Pancreas (tissue), 10 donors: ENCODE measurements at regions of chr3 and their contacts with region 1.

Region 1: DNA sequence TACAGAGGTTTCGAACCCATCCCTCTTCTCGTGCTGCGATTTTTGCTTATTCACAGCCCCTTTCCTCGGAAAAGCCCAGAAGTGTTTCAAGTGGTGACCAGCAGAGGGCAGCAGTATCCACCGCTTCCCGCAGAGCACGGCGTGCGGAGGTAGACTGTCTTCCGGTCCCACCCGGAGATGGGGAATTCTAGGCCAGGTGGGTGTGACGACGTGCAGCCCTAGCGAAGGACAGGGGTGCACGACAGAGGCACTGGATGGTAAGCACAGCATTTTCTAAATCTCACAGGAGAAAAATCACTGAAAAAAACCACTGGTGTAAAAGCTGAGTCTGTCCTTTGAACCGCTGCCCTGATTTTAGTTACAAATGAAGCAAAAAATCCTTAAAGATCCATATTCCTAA is 7.4 kb upstream of the PSMD6 start:
- DNase-seq: peak; percentile 58 to 83 (median 76)
- ATAC-seq: peak; percentile 85 to 99 (median 98)
- H3K4me3 ChIP-seq: peak overlapping the region in 2 of 4 donors; percentile 4 to 27
- H3K27ac ChIP-seq: no peak overlapping the region
- H3K4me1 ChIP-seq: no peaks in the 10 kb centered on the region
- H3K27me3 ChIP-seq: no peaks in the 10 kb centered on the region
- CTCF ChIP-seq: peak; percentile 70 to 79 (median 73)

Region 2: GRCh38 chr3:63911873-63912767 is 118.6 kb before region 1 on chr3 and contains the start of gene SCAANT1:
- intact Hi-C with region 1: no loop called
- DNase-seq: peak; percentile 92 to 96 (median 93)
- ATAC-seq: peak; percentile 79 to 87 (median 82)
- H3K4me3 ChIP-seq: peak within 1 kb of the TSS; percentile 66 to 94 (median 78)
- H3K27ac ChIP-seq: peak within 1 kb of the TSS; percentile 92 to 97 (median 96)
- H3K4me1 ChIP-seq: peaks cover 8 to 34% (median 18%) of the 10 kb centered on the region in 3 donors
- H3K27me3 ChIP-seq: no peaks in the 10 kb centered on the region
- CTCF ChIP-seq: no peak
- total RNA-seq, gene SCAANT1: not detected

Region 3: DNA sequence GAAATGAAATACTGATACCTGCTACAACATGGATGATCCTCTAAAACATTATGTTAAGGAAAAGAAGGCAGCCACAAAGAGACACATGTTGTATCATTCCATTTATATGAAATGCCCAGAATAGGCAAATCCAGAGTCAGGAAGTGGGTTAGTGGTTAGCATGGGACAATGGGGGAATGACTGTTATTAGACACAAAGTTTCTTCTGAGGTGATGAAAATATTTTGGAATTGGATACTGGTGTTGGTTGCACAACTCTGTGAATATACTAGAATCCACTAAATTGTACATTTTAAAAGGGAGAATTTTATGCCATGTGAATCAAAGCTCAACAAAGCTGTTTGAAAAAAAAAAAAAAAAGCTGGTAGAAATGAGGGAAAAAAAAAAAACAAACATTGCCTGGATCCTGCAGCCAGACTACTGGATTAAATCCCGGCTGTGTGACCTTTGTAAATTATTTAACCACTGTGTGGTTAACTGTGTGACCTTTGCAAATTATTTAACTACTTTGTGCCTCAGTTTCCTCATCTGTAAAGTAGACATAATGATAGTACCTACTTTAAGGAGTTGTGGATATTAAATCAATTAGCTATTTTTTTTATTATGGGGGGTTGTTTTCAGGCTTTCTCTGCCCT is 270.2 kb after region 1 on chr3:
- intact Hi-C with region 1: no loop called
- DNase-seq: no peak
- ATAC-seq: peak in 1 of 4 donors; percentile 32
- H3K4me3 ChIP-seq: no peak overlapping the region
- H3K27ac ChIP-seq: no peak overlapping the region
- H3K4me1 ChIP-seq: no peaks in the 10 kb centered on the region
- H3K27me3 ChIP-seq: no peaks in the 10 kb centered on the region
- CTCF ChIP-seq: no peak

Region 4: DNA sequence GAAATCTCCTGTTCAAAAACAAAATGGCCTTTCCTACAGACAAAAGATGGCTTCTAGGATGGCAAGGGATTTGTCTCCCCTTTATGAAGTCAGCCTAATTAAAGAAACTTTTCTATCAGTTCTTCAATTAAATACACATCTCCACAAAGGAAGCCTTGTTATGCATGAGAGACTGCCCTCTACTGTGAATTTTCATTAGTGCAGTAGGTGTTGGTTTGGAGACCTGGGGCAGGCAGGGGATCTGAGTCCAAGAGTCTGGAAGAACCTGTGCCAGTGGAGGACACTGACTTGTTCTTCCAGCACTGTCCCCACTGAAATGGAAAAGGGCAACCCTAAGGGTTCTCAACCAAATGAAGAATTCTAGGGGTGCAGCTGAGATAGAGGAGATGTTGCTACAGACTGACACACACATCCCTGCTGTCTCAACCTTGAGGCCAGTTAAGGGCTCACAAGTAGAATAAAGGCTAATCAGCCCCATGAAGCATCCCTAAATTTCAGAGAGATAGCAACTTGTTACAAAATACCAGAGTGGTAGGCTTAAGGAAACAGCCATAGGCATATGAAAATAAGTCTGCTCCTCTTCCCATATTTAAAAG is 368.6 kb after region 1 on chr3:
- intact Hi-C with region 1: loop called in 2 of 3 experiments (anchors 5 kb)
- DNase-seq: peak in 2 of 6 donors; percentile 14 to 48
- ATAC-seq: peak; percentile 58 to 93 (median 86)
- H3K4me3 ChIP-seq: no peak overlapping the region
- H3K27ac ChIP-seq: no peak overlapping the region
- H3K4me1 ChIP-seq: no peaks in the 10 kb centered on the region
- H3K27me3 ChIP-seq: no peaks in the 10 kb centered on the region
- CTCF ChIP-seq: peak in 3 of 4 donors; percentile 59 to 64 (median 59)

Region 5: GRCh38 chr3:64484289-64484992 is 453.7 kb after region 1 on chr3:
- intact Hi-C with region 1: loop called in 2 of 3 experiments (anchors 5 kb)
- DNase-seq: peak; percentile 62 to 88 (median 81)
- ATAC-seq: peak; percentile 82 to 97 (median 96)
- H3K4me3 ChIP-seq: no peak overlapping the region
- H3K27ac ChIP-seq: no peak overlapping the region
- H3K4me1 ChIP-seq: no peaks in the 10 kb centered on the region
- H3K27me3 ChIP-seq: no peaks in the 10 kb centered on the region
- CTCF ChIP-seq: peak; percentile 69 to 84 (median 81)

Region 6: DNA sequence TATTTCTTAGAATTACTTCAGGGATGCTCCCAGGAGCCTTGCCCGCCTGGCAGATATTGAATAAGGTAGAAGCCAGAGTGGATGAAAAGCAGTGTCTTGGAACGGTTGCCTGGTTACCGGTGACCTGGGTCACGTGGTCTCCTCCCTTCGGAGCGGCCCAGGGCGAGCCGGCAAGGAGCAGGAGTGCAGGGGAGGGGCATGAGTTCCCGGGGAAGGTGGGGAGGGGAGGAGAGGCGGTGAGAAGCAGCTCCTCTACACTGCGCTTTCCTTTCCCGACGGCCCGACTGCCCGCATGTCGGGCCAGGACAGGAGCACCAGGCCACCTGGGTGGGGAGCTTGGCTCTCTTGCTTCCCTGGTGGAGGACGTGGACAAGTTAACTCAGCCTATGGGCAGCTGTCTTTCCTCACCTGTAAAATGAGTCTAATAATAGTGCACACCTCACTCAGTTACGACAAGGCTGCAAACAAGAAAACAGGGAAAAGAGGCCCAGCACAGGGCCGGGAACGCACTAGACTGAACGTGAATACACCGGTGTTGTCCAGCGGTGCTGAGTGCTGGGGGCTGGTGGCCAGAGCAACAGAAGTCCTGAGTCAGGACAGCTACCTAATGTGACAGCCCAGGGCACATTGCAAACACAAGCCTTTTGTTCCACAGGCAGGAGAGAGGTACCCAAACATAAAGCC is 458.8 kb after region 1 on chr3:
- intact Hi-C with region 1: loop called in 2 of 3 experiments (anchors 5 kb)
- DNase-seq: peak; percentile 50 to 68 (median 62)
- ATAC-seq: peak; percentile 78 to 87 (median 84)
- H3K4me3 ChIP-seq: peak overlapping the region in 1 of 4 donors; percentile 22
- H3K27ac ChIP-seq: no peak overlapping the region
- H3K4me1 ChIP-seq: no peaks in the 10 kb centered on the region
- H3K27me3 ChIP-seq: no peaks in the 10 kb centered on the region
- CTCF ChIP-seq: no peak